ENCODE measurements at regions of chr2 and their contacts with region 1.

Region 1: DNA sequence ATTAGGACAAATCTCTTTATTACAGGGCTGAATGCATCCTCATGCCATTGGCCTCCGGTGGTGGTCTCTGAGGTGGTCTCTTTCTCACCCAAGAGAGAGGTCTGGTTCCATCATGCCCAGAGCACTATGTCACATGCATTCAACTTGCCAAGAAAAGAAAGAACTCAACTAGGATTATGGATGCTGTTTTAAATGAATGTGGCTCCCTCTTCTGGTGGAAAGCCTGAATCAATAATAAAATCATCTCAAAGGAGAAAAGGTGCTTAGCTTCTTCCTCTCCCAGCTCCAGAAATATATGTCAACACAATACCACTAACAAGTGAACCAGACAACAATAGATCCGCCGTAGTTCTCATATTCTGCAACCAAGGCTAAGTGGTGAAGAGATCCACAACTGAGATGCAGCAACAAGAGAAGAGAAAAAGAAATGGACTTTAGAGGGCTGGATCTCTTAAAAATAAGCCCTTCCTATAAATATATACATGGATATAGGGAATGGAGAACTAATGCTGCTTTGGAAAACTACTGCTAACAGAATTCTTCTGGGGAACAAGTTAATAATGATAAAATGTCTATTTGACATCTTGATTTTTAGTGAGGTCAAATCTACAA is 396.8 kb downstream of the NCKAP5 start:
- DNase-seq: peak; percentile 84
- ATAC-seq: peak; percentile 56
- H3K4me3 ChIP-seq: no peak overlapping the region
- H3K27ac ChIP-seq: no peak overlapping the region
- H3K4me1 ChIP-seq: peaks cover 11% of the 10 kb centered on the region
- H3K27me3 ChIP-seq: no peaks in the 10 kb centered on the region
- CTCF ChIP-seq: peak; percentile 84

Region 2: DNA sequence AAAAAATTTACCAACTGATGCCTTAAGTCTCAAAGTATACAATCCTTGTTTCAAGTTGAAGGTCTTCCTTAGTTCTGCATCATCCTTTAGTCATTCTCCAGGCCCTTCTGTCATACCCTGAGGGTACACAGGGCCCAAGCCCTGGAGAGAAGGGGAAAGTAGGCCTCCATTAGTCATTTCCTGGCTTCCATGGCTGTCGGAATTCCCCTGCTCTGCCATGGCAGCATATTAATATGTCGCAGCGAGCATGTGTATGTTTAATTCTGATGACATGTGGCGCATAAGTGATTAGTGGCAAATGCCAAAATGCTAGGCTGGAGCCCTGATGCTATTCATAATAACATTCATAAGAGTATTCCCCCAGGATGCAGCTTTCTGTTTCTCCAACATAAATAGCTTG is 732.8 kb before region 1 on chr2:
- CTCF ChIA-PET with region 1: no interaction called
- POLR2A ChIA-PET with region 1: no interaction called
- intact Hi-C with region 1: loop called (anchors 5 kb)
- DNase-seq: peak; percentile 99
- ATAC-seq: peak; percentile 76
- H3K4me3 ChIP-seq: peak overlapping the region; percentile 25; the same call in 1 of the 2 replicates
- H3K27ac ChIP-seq: peak overlapping the region; percentile 98
- H3K4me1 ChIP-seq: peaks cover 52% of the 10 kb centered on the region
- H3K27me3 ChIP-seq: no peaks in the 10 kb centered on the region
- CTCF ChIP-seq: no peak

Region 3: DNA sequence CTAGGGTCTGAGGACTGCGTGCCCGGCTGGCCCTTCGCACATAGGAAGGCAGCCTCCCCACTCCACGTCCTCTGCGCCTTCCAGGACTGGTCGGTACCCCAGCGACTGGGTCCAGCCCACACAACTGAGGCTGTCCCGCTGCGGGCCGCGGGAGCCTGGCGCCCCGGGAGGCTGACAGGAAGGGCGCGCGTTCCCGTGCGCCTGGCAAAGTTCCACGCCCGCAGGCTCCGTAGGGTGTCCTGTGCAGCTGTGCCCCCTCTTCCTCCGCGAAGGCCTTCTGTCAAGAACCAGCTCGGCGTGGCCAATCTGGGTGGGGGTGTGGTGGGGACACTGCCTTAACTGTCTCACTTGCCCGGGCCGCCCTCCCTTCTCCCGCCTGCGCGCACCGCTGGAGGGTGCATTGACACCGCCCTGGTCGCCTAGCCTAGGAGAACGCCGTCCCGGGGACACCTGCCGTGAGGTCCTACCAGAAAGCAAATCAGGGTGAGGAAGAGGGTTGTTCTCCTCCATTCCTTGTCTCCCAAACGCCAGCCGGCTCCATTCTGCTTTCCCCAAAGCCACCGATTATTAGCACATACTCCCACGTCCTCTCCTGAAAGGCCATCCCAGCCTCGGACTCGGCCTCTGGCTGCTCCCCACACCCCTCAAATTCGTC is 500.9 kb before region 1 on chr2:
- CTCF ChIA-PET with region 1: no interaction called
- POLR2A ChIA-PET with region 1: interaction called, 3 read pairs
- intact Hi-C with region 1: loop called (anchors 2 kb)
- DNase-seq: peak; percentile 54
- ATAC-seq: peak; percentile 61
- H3K4me3 ChIP-seq: peak overlapping the region; percentile 78
- H3K27ac ChIP-seq: peak overlapping the region; percentile 13; the same call in 1 of the 2 replicates
- H3K4me1 ChIP-seq: peaks cover 24% of the 10 kb centered on the region
- H3K27me3 ChIP-seq: no peaks in the 10 kb centered on the region
- CTCF ChIP-seq: peak; percentile 26; the same call in 1 of the 2 replicates

Region 4: DNA sequence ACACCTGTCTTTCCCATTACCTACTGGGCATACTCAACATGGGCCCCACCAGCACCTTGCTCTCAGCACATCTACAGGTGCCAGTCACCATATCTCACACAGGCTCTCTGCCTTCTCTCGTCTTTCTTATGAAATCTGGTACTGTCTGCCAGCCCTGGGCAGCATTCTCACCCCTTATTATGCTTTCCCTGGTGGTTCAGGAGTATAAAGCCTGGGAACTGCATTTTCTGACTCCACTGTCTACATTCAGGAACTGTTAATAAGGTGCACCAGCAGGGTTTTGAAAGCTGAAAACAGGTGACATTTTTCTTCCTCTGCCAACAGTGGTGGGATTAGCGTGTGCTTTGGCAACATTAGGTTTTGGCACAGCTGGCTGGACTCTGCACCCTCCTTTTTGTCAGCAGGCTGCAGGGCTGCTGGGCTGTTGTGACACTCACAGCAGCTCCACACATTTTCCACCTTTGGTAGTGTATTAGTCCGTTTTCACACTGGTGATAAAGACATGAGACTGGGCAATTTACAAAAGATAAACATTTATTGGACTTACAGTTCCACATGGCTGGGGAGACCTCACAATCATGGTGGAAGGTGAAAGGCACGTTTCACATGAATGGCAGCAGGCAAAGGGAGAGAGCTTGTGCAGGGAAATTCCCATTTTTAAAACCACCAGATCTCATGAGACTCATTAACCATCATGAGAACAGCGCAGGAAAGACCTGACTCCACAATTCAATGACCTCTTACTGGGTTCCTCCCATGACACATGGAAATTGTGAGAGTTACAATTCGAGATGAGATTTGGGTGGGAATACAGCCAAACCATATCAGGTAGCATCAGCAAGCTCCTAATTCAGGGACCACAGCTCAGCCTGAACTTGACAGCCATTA is 158.4 kb before region 1 on chr2:
- CTCF ChIA-PET with region 1: no interaction called
- POLR2A ChIA-PET with region 1: no interaction called
- intact Hi-C with region 1: no loop called
- DNase-seq: no peak
- ATAC-seq: no peak
- H3K4me3 ChIP-seq: no peak overlapping the region
- H3K27ac ChIP-seq: no peak overlapping the region
- H3K4me1 ChIP-seq: no peaks in the 10 kb centered on the region
- H3K27me3 ChIP-seq: no peaks in the 10 kb centered on the region
- CTCF ChIP-seq: no peak

Region 5: GRCh38 chr2:133077269-133077822 is 94.2 kb before region 1 on chr2:
- CTCF ChIA-PET with region 1: no interaction called
- POLR2A ChIA-PET with region 1: no interaction called
- intact Hi-C with region 1: no loop called
- DNase-seq: no peak
- ATAC-seq: no peak
- H3K4me3 ChIP-seq: no peak overlapping the region
- H3K27ac ChIP-seq: no peak overlapping the region
- H3K4me1 ChIP-seq: peaks cover 12% of the 10 kb centered on the region
- H3K27me3 ChIP-seq: no peaks in the 10 kb centered on the region
- CTCF ChIP-seq: no peak

Region 6: GRCh38 chr2:133092571-133092970 is 78.9 kb before region 1 on chr2:
- CTCF ChIA-PET with region 1: no interaction called
- POLR2A ChIA-PET with region 1: no interaction called
- intact Hi-C with region 1: no loop called
- DNase-seq: peak; percentile 20
- ATAC-seq: peak; percentile 33; the same call in 1 of the 2 replicates
- H3K4me3 ChIP-seq: no peak overlapping the region
- H3K27ac ChIP-seq: no peak overlapping the region
- H3K4me1 ChIP-seq: no peaks in the 10 kb centered on the region
- H3K27me3 ChIP-seq: no peaks in the 10 kb centered on the region
- CTCF ChIP-seq: no peak

Region 7: DNA sequence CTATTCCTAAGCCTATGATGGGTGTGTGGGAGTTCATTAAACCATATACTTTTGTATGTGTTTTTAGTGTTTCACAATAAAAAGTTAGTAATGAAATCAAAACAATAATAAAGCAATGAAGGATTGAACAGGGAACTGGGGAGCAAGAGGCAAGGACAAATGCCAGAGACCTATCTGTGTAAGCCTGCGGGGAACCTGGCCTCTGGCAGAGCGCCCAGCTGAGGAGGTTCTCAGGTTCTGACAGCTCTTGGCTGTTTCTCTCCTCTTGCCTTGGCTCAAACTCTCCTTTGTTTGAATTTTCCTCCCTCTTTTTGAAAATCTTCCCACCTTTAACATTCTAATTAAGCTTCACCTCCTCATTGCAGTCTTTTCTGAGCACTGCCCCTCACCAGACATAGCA is 596.8 kb after region 1 on chr2:
- CTCF ChIA-PET with region 1: interaction called, 10 read pairs
- POLR2A ChIA-PET with region 1: no interaction called
- intact Hi-C with region 1: no loop called
- DNase-seq: peak; percentile 44
- ATAC-seq: peak; percentile 58
- H3K4me3 ChIP-seq: no peak overlapping the region
- H3K27ac ChIP-seq: peak overlapping the region; percentile 32
- H3K4me1 ChIP-seq: peaks cover 22% of the 10 kb centered on the region
- H3K27me3 ChIP-seq: no peaks in the 10 kb centered on the region
- CTCF ChIP-seq: no peak

Measured in PC-3 (cell line).